ENCODE measurements at regions of chr3 and their contacts with region 1.

Region 1: GRCh38 chr3:156253150-156253549 is 132.8 kb downstream of the KCNAB1 start:
- DNase-seq: no peak
- H3K4me3 ChIP-seq: no peak overlapping the region
- H3K27ac ChIP-seq: no peak overlapping the region
- H3K4me1 ChIP-seq: no peaks in the 10 kb centered on the region
- H3K27me3 ChIP-seq: no peaks in the 10 kb centered on the region
- CTCF ChIP-seq: no peak
- POLR2A ChIP-seq: no peak

Region 2: GRCh38 chr3:156093964-156094363 is 159.2 kb before region 1 on chr3:
- intact Hi-C with region 1: loop called in 1 of 2 experiments (anchors 10 kb)
- DNase-seq: no peak
- H3K4me3 ChIP-seq: no peak overlapping the region
- H3K27ac ChIP-seq: no peak overlapping the region
- H3K4me1 ChIP-seq: no peaks in the 10 kb centered on the region
- H3K27me3 ChIP-seq: no peaks in the 10 kb centered on the region
- CTCF ChIP-seq: no peak
- POLR2A ChIP-seq: no peak

Region 3: GRCh38 chr3:156291272-156292123 is 38.3 kb after region 1 on chr3:
- intact Hi-C with region 1: no loop called
- DNase-seq: peak in 3 of 7 donors; percentile 17 to 26 (median 20)
- H3K4me3 ChIP-seq: peak overlapping the region in 1 of 4 donors; percentile 49
- H3K27ac ChIP-seq: no peak overlapping the region
- H3K4me1 ChIP-seq: peaks cover 0 to 6% of the 10 kb centered on the region in 2 donors
- H3K27me3 ChIP-seq: peaks cover 20% of the 10 kb centered on the region
- CTCF ChIP-seq: no peak
- POLR2A ChIP-seq: no peak

Region 4: GRCh38 chr3:156382458-156383346 is 129.6 kb after region 1 on chr3:
- intact Hi-C with region 1: no loop called
- DNase-seq: peak in 6 of 7 donors; percentile 16 to 60 (median 32)
- H3K4me3 ChIP-seq: no peak overlapping the region
- H3K27ac ChIP-seq: no peak overlapping the region
- H3K4me1 ChIP-seq: no peaks in the 10 kb centered on the region
- H3K27me3 ChIP-seq: no peaks in the 10 kb centered on the region
- CTCF ChIP-seq: peak; percentile 34 to 63 (median 50)
- POLR2A ChIP-seq: no peak

Measured in adrenal gland (tissue), 19 donors.